HepG2 (cell line): ENCODE measurements at regions of chr2 and their contacts with region 1.

Region 1: GRCh38 chr2:106542811-106543259 is 55.7 kb downstream of the CD8B2 start:
- DNase-seq: peak; percentile 53
- ATAC-seq: peak; percentile 96
- H3K4me3 ChIP-seq: peak overlapping the region; percentile 32 to 57 (median 38); a peak in 4 of 6 replicates
- H3K27ac ChIP-seq: no peak overlapping the region
- H3K4me1 ChIP-seq: no peaks in the 10 kb centered on the region
- H3K27me3 ChIP-seq: peaks cover 2 to 50% of the 10 kb centered on the region in 2 experiments; a peak in 3 of 5 replicates
- CTCF ChIP-seq: peak; percentile 96
- EP300 ChIP-seq: no peak
- POLR2A ChIP-seq: no peak
- RAD21 ChIP-seq: peak; percentile 90

Region 2: DNA sequence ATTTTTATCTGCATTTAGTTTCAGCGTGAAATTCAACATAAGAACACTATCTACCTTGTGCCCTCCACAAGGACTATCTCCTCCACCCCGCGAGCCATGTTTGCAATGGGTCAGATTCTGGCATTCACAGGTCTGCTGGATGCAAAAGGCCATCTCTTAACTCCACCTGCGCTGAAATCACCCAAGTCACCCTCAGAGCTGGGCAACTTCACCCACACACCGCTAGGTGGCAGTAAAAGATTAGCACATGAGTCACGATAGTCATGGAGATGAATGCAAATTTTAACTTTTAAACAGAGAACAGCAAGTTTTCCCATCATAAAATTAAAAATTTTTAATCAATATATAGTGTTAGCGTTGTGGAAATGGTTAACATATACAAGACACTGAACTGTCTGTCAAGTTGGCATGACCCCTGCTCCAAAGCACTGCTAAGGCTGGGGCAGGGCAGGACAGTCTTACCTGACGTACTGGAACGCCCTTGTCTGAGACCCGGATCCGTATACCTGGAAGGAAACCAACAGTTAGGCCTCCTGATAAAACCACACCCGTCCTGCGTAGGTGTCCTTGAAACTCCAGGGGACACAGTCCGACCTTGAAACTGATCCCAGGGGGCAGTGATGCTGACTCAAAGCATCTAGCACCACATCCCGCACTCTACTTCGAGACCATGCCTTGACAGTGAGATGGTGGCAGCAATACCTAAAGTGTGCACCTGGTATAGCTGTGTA is 438.3 kb before region 1 on chr2:
- CTCF ChIA-PET with region 1: interaction called, 20 read pairs
- POLR2A ChIA-PET with region 1: no interaction called
- in situ Hi-C with region 1: loop called (anchors 5 kb)
- intact Hi-C with region 1: loop called (anchors 1 kb)
- DNase-seq: peak; percentile 72
- ATAC-seq: peak; percentile 86
- H3K4me3 ChIP-seq: no peak overlapping the region
- H3K27ac ChIP-seq: no peak overlapping the region
- H3K4me1 ChIP-seq: no peaks in the 10 kb centered on the region
- H3K27me3 ChIP-seq: no peaks in the 10 kb centered on the region
- CTCF ChIP-seq: peak; percentile 95
- EP300 ChIP-seq: no peak
- POLR2A ChIP-seq: no peak
- RAD21 ChIP-seq: peak; percentile 92

Region 3: DNA sequence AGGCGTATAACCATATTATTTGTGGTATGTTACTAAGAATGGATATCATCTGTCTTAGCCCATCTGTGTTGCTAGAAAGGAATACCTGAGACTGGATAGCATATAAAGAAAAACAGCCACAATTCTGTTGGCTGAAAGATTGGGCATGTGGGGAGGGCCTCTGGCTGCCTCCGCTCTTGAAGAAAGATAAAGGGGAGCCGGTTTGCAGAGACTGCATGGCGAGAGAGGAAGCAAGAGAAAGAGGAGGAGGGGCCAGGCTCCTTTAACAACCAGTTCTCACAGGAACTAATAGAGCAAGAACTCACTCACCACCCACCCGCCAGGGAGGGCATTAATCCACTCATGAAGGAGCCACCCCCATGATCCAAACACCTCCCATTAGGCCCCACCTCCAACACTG is 319.5 kb before region 1 on chr2:
- CTCF ChIA-PET with region 1: no interaction called
- POLR2A ChIA-PET with region 1: no interaction called
- in situ Hi-C with region 1: no loop called
- intact Hi-C with region 1: loop called (anchors 10 kb)
- DNase-seq: no peak
- ATAC-seq: no peak
- H3K4me3 ChIP-seq: no peak overlapping the region
- H3K27ac ChIP-seq: no peak overlapping the region
- H3K4me1 ChIP-seq: no peaks in the 10 kb centered on the region
- H3K27me3 ChIP-seq: no peaks in the 10 kb centered on the region; a peak in 2 of 5 replicates
- CTCF ChIP-seq: no peak
- EP300 ChIP-seq: no peak
- POLR2A ChIP-seq: no peak
- RAD21 ChIP-seq: no peak

Region 4: DNA sequence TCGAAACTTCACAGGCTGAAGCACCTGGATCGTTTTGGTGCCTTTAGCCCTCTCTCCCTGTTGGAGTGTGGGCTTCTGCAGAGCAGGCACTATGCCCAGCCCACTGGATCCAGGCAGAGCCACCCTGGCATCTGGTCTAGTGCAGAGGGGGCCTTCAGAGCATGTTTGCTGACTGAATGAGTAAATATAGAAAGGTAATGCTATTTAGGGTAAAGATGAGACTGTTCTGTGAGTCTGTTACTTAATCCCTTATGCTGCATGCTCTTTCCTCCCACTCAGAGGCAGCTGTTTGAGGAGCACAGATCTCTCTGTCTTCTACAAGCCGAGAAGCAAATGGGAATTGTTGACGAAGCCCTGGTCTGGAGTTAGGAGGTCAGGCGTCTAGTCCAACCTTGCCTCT is 204.8 kb before region 1 on chr2:
- CTCF ChIA-PET with region 1: no interaction called
- POLR2A ChIA-PET with region 1: no interaction called
- in situ Hi-C with region 1: no loop called
- intact Hi-C with region 1: no loop called
- DNase-seq: no peak
- ATAC-seq: peak; percentile 63
- H3K4me3 ChIP-seq: no peak overlapping the region
- H3K27ac ChIP-seq: no peak overlapping the region
- H3K4me1 ChIP-seq: peaks cover 28% of the 10 kb centered on the region
- H3K27me3 ChIP-seq: peaks cover 0 to 46% of the 10 kb centered on the region in 2 experiments; a peak in 3 of 5 replicates
- CTCF ChIP-seq: no peak
- EP300 ChIP-seq: no peak
- POLR2A ChIP-seq: no peak
- RAD21 ChIP-seq: no peak

Region 5: DNA sequence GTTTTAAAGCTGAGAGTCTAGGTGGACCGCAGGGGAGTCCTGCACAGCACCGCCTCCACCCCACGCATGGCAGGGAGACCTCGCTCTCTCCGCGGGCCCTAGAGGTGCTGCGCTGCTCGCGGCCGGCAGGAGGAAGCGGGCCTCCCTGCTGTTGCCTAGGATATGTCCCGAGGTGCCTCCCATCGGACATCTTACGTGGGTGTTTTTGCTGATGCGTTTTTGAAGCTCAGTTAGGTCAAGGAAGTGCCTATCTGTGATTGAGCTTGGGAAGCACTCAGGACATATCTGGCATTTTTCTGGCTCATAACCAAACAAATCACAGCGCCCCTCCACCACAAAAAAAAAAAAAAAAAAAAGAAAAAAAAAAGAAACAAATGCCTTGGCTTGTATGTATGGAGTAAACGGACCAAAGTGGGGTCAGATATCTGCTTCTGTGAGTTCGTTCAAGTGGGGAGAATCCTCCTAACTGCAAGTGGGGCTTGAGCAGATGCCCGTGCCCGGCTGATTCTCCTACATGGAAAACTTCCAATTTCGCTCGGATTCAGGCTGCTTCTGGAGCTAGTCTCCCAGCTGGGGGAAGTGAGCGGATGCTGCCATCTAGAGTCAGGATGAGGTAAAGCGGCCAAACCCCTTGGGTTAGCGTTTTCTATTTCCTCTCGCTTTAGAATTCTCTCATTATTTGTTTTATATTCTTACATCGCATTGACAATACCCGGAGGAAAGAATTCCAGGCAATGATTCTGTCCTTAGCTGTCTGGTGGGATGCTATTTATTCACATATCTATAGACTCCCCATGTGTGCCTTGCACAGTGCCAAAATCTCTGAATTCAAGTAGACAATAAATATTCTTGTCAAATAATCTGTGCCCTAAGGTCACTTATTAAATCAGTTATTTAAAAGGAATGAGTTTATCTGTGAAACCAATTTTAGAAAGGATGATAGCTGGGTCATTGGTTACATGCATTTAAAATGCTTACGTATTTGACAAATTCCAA is 39.6 kb after region 1 on chr2:
- CTCF ChIA-PET with region 1: interaction called, 3 read pairs
- POLR2A ChIA-PET with region 1: interaction called, 3 read pairs
- in situ Hi-C with region 1: no loop called
- intact Hi-C with region 1: loop called (anchors 1 kb)
- DNase-seq: peak; percentile 79
- ATAC-seq: peak; percentile 98
- H3K4me3 ChIP-seq: peak overlapping the region in 1 of 3 experiments; percentile 47; a peak in 2 of 6 replicates
- H3K27ac ChIP-seq: no peak overlapping the region
- H3K4me1 ChIP-seq: peaks cover 17% of the 10 kb centered on the region
- H3K27me3 ChIP-seq: peaks cover 0 to 34% of the 10 kb centered on the region in 2 experiments; a peak in 2 of 5 replicates
- CTCF ChIP-seq: peak; percentile 93
- EP300 ChIP-seq: no peak
- POLR2A ChIP-seq: no peak
- RAD21 ChIP-seq: peak; percentile 68